A673 (cell line): ENCODE measurements at regions of chr3 and their contacts with region 1.

Region 1: DNA sequence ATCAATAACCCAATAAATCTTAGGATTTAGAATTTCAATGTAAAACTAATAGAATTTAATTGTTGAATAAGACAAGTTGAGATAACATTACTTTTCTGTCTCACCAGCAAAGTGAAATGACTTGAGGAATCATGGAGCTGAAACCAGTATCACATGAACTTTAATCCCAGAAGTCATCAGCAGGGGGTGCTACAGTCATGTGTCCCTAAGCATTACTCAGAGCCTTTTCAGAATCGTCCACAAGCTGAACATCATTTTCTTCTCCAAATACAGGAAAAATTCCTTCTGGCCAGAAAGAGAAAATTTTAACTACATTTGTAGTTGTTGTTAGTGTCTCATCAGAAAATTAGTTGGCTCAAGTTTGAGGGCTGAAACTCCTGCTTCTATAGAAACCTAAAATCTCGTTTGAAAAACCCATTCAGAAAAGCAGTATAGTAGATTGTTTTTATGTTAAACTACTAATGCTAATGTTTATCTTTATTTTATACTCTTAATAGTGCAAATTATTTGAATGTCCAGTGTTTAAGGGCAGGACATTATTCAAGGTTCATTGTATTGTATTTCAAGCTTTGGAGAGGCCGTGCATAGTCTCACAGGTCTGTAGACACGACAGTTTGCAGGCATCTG is 384.1 kb downstream of the PLOD2 start:
- DNase-seq: peak; percentile 73
- H3K4me3 ChIP-seq: no peak overlapping the region
- H3K27ac ChIP-seq: no peak overlapping the region
- H3K4me1 ChIP-seq: no peaks in the 10 kb centered on the region
- H3K27me3 ChIP-seq: no peaks in the 10 kb centered on the region
- CTCF ChIP-seq: peak; percentile 81

Region 2: GRCh38 chr3:144457758-144458157 is 1319.1 kb before region 1 on chr3:
- CTCF ChIA-PET with region 1: interaction called, 13 read pairs
- POLR2A ChIA-PET with region 1: no interaction called
- intact Hi-C with region 1: no loop called
- DNase-seq: no peak
- H3K4me3 ChIP-seq: no peak overlapping the region
- H3K27ac ChIP-seq: no peak overlapping the region
- H3K4me1 ChIP-seq: no peaks in the 10 kb centered on the region
- H3K27me3 ChIP-seq: no peaks in the 10 kb centered on the region
- CTCF ChIP-seq: no peak

Region 3: GRCh38 chr3:145395421-145395820 is 381.5 kb before region 1 on chr3:
- CTCF ChIA-PET with region 1: no interaction called
- POLR2A ChIA-PET with region 1: no interaction called
- intact Hi-C with region 1: no loop called
- DNase-seq: no peak
- H3K4me3 ChIP-seq: no peak overlapping the region
- H3K27ac ChIP-seq: no peak overlapping the region
- H3K4me1 ChIP-seq: no peaks in the 10 kb centered on the region
- H3K27me3 ChIP-seq: no peaks in the 10 kb centered on the region
- CTCF ChIP-seq: no peak

Region 4: GRCh38 chr3:146026547-146026946 is 249.7 kb after region 1 on chr3:
- CTCF ChIA-PET with region 1: interaction called, 3 read pairs
- POLR2A ChIA-PET with region 1: no interaction called
- intact Hi-C with region 1: loop called (anchors 5 kb)
- DNase-seq: peak; percentile 5
- H3K4me3 ChIP-seq: no peak overlapping the region
- H3K27ac ChIP-seq: no peak overlapping the region
- H3K4me1 ChIP-seq: no peaks in the 10 kb centered on the region
- H3K27me3 ChIP-seq: no peaks in the 10 kb centered on the region
- CTCF ChIP-seq: peak; percentile 29; the same call in 1 of the 2 replicates

Region 5: DNA sequence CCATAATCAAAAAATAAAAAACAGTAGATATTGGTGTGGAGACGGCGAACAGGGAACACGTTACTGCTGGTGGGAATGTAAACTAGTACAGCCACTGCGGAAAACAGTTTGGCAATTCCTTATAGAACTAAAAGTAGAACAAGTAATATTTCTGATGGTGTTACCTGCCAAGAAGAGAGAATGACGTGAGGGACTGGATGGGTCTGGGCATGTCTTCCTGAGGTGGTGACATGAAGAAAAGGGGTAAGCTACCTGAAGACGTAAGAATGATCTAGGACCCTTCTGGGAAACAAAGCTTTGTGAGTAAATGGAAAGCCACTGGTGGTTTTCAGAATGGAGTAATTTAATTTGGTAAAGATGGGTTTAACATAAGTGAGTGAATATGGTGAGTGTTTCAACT is 403.5 kb after region 1 on chr3:
- CTCF ChIA-PET with region 1: no interaction called
- POLR2A ChIA-PET with region 1: no interaction called
- intact Hi-C with region 1: loop called (anchors 2 kb)
- DNase-seq: no peak
- H3K4me3 ChIP-seq: no peak overlapping the region
- H3K27ac ChIP-seq: no peak overlapping the region
- H3K4me1 ChIP-seq: peaks cover 9% of the 10 kb centered on the region
- H3K27me3 ChIP-seq: no peaks in the 10 kb centered on the region
- CTCF ChIP-seq: no peak

Region 6: DNA sequence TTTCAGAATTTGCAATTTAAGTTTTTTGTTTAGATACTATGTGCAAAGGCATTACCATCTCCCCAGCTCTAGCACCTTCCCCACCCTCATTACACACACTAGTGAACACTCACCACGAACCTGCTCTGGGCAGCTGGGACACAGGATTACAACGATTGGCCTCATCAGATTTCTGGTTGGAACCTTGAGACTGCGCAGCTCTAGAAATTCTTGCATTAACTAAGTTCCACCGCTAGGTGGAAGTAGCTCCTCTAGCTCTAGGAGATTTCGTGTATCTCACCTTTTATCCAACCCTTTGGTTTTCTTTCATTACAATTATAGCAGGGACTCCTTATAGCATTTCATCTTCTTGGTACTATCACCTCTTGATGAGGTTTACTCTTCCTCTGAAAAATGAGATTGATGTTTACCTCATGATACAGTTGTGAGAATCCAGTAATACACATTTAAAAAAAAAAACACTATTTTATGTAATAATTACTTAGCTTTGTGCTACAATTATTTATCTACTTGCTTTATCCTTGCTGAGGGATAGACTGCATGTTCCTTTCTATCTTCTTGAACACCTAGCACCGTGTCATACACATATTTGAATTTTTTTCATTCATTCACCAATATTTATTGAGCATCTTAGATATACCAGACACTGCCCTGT is 412.8 kb after region 1 on chr3:
- CTCF ChIA-PET with region 1: interaction called, 7 read pairs
- POLR2A ChIA-PET with region 1: no interaction called
- intact Hi-C with region 1: loop called (anchors 2 kb)
- DNase-seq: peak; percentile 71
- H3K4me3 ChIP-seq: no peak overlapping the region
- H3K27ac ChIP-seq: no peak overlapping the region
- H3K4me1 ChIP-seq: peaks cover under 1% of the 10 kb centered on the region
- H3K27me3 ChIP-seq: no peaks in the 10 kb centered on the region
- CTCF ChIP-seq: peak; percentile 75

Region 7: DNA sequence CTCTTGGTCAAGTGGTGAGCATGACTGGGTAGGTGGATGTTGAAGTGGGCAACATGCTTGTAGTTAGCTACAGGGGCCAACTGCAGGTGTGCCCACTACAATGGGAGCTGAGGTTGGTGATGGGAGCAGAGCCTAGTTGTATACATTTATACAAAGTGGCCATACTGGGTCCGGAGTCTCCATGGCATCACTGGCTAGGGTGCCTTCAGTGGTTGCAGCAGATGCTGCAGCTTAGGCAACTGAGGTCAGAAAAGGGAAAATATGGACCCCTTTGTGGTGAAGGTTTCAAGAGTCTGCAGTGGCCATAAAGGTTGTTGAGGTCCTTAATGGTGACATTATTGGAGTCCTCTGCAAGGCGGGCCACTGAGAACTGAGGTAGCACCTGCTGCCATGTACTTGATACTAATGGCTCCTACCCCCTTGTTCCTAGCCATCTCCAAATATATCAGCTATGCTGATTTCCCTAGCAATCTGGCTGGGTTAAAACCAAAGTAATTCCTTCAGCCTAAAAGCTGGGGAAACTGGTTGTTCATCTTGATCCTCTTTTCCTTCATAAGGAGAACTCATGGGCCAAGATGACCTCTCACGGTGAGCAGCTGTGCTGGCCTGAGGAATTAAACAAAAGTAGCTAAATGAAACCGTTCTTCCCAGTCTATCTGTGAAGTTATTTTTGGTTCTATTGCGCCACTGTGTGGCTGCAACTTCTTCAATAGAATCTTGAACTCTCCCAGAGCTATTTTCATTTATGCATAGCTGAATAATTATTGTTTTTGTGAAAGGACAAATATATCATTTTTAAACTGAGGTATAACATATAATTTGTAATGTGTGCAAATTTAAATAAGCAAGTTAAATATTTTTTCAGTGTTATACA is 550.0 kb after region 1 on chr3:
- CTCF ChIA-PET with region 1: interaction called, 7 read pairs
- POLR2A ChIA-PET with region 1: no interaction called
- intact Hi-C with region 1: loop called (anchors 10 kb)
- DNase-seq: peak; percentile 68
- H3K4me3 ChIP-seq: no peak overlapping the region
- H3K27ac ChIP-seq: no peak overlapping the region
- H3K4me1 ChIP-seq: no peaks in the 10 kb centered on the region
- H3K27me3 ChIP-seq: no peaks in the 10 kb centered on the region
- CTCF ChIP-seq: peak; percentile 74